ENCODE measurements at regions of chr5 and their contacts with region 1.

Region 1: DNA sequence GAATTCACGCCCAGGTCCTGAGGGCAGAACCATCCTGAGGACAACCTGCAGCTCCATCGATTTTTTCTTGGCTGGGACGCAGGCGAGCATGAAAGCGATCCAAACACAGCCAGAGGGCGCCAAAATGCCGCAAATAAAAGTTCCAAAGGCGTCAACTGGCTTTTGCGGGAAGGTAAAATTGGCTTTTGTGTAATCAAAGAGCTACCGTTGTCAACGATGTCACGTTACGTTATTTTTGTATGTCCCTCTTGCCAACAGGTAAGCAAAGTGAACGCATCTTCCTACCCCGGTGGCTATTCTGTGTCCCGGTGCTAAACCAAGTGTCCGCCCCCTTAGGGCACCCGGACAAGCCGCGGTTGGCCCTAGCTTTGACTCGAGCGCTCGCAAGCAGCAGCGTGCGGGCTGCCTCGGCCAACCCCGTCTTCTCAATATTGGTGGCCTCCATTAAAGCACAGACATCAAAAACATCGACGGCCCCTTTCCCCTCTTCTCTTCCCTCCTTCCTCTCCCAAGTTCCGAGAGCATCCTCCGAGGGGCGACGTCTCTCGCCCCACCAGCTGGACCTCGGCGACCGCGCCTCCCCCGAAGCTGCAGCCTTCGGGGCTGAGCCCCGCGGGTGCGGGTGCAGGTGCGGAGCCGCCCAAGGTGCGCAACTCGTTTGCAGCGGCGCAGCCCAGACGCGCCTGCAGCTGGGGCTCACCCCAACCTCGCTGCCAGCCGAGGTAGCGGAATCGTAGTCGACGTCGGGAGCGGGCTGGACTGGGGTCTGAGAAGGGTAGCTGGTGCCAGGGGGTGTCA is 1.1 kb upstream of the BASP1 start:
- DNase-seq: peak; percentile 70 to 93 (median 84)

Region 2: GRCh38 chr5:17132444-17133083 is 83.8 kb before region 1 on chr5:
- intact Hi-C with region 1: no loop called
- DNase-seq: peak in 1 of 42 donors; percentile 12

Region 3: DNA sequence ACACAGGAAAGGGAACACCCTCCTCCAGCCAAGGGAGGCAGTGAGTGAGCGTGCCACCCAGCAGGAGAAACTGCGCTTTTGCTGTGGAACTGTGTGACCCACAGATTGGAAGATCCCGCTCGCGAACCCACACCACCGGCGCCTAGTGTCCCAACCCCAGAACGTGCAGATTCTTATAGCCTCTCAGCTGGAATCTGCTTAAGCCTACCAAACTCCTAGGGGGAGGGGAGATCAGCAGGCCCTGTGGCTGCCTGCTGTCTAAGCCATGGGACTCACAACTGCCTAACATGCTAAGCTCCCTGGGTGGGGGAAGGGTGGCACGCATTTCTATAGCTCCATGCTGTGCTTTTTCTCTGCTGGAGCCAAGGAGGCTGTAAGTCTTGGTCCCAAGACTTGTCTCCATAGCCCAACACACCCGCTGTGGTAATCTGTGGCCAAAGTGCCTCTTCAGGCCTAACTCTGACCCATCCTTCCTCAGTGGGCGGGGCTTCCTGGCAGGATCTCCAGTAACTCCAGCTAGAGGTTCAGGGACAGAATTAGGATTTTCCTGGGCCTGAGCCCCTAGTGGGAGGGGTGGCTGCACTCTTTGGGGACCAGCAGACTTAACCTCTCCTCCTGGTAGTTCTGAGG is 902.9 kb after region 1 on chr5:
- intact Hi-C with region 1: loop called (anchors 5 kb)
- DNase-seq: no peak

Region 4: DNA sequence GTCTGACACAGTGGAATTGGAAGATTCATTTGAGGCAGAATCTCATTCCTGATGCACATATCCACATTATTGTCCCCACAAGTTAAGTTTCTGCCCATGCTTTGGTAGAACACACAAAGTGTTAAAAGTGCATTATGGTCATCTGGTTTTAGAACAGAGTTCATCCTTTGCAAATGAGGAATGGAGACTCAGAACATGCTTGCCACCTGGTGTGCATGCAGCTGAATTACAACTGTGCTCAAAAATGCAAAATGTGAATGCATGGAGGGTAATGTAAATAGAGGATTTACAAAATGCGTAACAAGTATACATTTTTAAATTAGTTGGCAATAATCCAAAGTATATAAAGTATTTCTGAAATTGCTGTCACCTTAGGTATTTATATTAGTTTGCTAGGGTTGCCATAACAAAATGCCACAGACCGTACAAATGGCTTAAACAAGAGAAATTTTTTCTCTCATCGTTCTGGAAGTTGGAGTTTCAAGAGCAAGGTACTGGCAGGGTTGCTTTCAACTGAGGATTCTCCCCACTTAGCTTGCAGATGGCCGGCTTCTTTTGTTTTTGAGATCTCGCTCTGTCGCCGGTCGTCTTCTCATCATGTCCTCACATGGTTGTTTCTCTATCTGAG is 1089.0 kb after region 1 on chr5:
- intact Hi-C with region 1: loop called (anchors 5 kb)
- DNase-seq: peak in 26 of 42 donors; percentile 8 to 64 (median 29)

Measured in head of caudate nucleus (tissue), 42 donors.